Calu3 (cell line): ENCODE measurements at regions of chr17 and their contacts with region 1.

Region 1: GRCh38 chr17:75191584-75191983 is 8.8 kb upstream of the SUMO2 start:
- DNase-seq: no peak
- H3K4me3 Mint-ChIP-seq: no peak overlapping the region
- H3K27ac Mint-ChIP-seq: no peak overlapping the region
- H3K4me1 Mint-ChIP-seq: peaks cover 9% of the 10 kb centered on the region
- H3K27me3 Mint-ChIP-seq: no peaks in the 10 kb centered on the region
- CTCF ChIP-seq: no peak

Region 2: GRCh38 chr17:75205037-75205792 is 13.6 kb after region 1 on chr17 and contains the start of gene NUP85:
- CTCF ChIA-PET with region 1: interaction called, 11 read pairs
- intact Hi-C with region 1: no loop called
- DNase-seq: peak; percentile 96
- H3K4me3 Mint-ChIP-seq: peak within 1 kb of the TSS; percentile 89
- H3K27ac Mint-ChIP-seq: peak within 1 kb of the TSS; percentile 99
- H3K4me1 Mint-ChIP-seq: peaks cover 7% of the 10 kb centered on the region
- H3K27me3 Mint-ChIP-seq: no peaks in the 10 kb centered on the region
- CTCF ChIP-seq: no peak
- total RNA-seq, gene NUP85: 116 and 117 TPM in 2 replicates

Region 3: DNA sequence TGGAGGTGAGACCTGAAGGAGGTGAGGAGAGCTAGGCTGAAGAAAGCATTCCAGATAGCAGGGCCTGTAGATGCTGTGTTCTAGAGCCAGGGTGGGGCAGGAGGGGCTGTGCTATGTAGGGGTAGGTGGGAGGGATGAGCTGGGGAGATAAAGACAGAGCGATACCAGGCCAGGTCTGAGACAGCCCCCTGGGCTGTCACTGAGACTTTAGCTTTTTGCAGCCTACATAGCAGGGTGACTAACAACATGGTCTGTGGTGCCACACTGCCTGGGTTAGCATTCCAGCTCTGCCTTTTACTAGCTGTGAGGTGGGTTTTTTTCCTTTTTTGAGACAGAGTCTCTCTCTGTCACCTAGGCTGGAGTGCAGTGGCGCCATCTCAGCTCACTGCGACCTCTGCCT is 28.2 kb after region 1 on chr17:
- CTCF ChIA-PET with region 1: interaction called, 10 read pairs
- intact Hi-C with region 1: no loop called
- DNase-seq: no peak
- H3K4me3 Mint-ChIP-seq: no peak overlapping the region
- H3K27ac Mint-ChIP-seq: no peak overlapping the region
- H3K4me1 Mint-ChIP-seq: no peaks in the 10 kb centered on the region
- H3K27me3 Mint-ChIP-seq: no peaks in the 10 kb centered on the region
- CTCF ChIP-seq: no peak

Region 4: DNA sequence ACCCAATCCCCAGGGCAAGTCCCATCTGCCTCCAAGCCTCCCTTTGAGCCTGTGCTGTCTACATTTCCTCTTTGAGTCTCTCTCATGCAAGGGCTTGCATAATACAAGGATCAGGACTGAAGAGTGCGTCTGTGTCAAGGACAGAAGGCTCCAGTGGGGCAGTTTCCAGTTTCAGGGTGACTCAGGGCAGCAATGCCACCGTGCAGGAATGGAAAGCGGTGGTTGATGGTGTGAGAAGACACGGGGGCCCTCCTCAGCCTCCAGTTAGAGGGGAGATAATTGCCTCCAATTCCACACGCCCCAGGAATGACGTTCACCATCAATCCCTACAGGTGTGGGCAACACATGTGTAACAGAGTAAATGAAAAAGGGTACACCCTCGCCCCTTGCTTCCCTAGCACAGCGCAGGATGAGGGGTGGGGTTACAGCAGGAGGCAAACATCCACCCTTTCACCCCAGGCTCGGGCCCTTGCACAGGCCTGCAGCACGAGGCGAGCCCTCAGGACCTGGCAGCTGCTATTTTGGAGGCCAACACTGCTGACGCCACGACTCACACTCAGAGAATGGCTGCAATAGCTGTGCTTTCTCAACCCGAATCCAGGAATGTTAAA is 122.5 kb after region 1 on chr17:
- CTCF ChIA-PET with region 1: no interaction called
- intact Hi-C with region 1: no loop called
- DNase-seq: no peak
- H3K4me3 Mint-ChIP-seq: no peak overlapping the region
- H3K27ac Mint-ChIP-seq: no peak overlapping the region
- H3K4me1 Mint-ChIP-seq: peaks cover 10% of the 10 kb centered on the region
- H3K27me3 Mint-ChIP-seq: no peaks in the 10 kb centered on the region
- CTCF ChIP-seq: no peak

Region 5: GRCh38 chr17:75335315-75335714 is 143.7 kb after region 1 on chr17:
- CTCF ChIA-PET with region 1: no interaction called
- intact Hi-C with region 1: no loop called
- DNase-seq: no peak
- H3K4me3 Mint-ChIP-seq: no peak overlapping the region
- H3K27ac Mint-ChIP-seq: no peak overlapping the region
- H3K4me1 Mint-ChIP-seq: no peaks in the 10 kb centered on the region
- H3K27me3 Mint-ChIP-seq: no peaks in the 10 kb centered on the region
- CTCF ChIP-seq: no peak